Right cardiac atrium (tissue), 5 donors: ENCODE measurements at regions of chr1 and their contacts with region 1.

Region 1: DNA sequence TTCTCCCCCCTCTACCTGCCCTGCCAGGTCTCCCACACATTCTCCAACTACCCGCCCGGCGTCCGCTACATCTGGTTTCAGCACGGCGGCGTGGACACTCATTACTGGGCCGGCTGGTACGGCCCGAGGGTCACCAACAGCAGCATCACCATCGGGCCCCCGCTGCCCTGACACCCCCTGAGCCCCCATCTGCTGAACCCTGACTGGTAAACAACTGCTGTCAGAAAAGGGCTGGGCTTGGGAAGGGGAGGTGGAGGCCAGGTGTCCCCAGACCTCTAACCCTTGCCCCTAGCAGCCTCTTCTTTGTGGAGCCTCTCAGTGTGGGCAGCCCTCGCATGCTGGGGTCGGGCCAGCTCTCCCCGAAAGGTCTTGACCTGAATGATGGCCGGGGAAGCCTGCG is 2.9 kb upstream of the FBXO6 start:
- DNase-seq: peak in 1 of 3 donors; percentile 39
- ATAC-seq: no peak
- H3K4me3 ChIP-seq: no peak overlapping the region
- H3K27ac ChIP-seq: no peak overlapping the region
- H3K4me1 ChIP-seq: no peaks in the 10 kb centered on the region
- H3K27me3 ChIP-seq: no peaks in the 10 kb centered on the region

Region 2: GRCh38 chr1:11707621-11708276 is 46.6 kb after region 1 on chr1:
- intact Hi-C with region 1: loop called in 2 of 4 experiments (anchors 5 to 10 kb)
- DNase-seq: peak; percentile 72 to 86 (median 85)
- ATAC-seq: peak; percentile 78 to 83
- H3K4me3 ChIP-seq: no peak overlapping the region
- H3K27ac ChIP-seq: no peak overlapping the region
- H3K4me1 ChIP-seq: no peaks in the 10 kb centered on the region
- H3K27me3 ChIP-seq: no peaks in the 10 kb centered on the region

Region 3: DNA sequence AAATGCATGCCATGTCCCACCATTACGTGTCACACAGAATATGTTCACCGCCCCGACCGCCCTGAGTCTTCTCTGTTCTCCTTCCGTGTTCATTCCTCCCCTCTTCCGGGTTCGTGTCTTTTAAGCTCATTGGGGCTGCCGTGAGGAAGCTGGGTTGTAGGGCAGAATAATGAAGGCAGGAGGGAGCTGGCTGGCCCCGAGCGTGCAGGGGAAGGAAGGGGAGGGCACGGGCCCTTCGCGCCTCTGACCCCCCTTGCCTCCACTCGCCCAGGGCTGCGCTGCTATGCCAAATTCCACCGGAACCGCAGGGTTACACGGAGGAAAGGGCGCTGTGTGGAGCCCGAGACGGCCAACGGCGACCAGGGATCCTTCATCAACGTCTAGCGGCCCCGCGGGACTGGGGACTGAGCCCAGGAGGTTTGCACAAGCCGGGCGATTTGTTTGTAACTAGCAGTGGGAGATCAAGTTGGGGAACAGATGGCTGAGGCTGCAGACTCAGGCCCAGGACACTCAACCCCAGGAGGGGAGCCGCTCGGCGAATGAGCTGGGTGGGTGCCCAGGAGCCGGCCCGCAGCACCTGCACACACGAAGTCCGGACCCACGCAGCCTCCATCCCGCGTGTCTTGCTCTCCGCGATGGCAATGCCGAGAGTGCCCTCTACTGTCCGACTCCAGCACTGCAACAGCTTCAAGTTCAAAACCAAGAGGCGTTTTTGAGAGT is 58.4 kb after region 1 on chr1:
- intact Hi-C with region 1: loop called in 1 of 4 experiments (anchors 10 kb)
- DNase-seq: peak; percentile 79 to 94 (median 90)
- ATAC-seq: peak; percentile 76 to 85
- H3K4me3 ChIP-seq: peak overlapping the region; percentile 41
- H3K27ac ChIP-seq: no peak overlapping the region
- H3K4me1 ChIP-seq: peaks cover 2% of the 10 kb centered on the region
- H3K27me3 ChIP-seq: no peaks in the 10 kb centered on the region